Activated CD4-positive, alpha-beta T cell treated with anti-CD3 and anti-CD28 coated beads for 36 hours (primary cell): ENCODE measurements at regions of chr12 and their contacts with region 1.

Region 1: DNA sequence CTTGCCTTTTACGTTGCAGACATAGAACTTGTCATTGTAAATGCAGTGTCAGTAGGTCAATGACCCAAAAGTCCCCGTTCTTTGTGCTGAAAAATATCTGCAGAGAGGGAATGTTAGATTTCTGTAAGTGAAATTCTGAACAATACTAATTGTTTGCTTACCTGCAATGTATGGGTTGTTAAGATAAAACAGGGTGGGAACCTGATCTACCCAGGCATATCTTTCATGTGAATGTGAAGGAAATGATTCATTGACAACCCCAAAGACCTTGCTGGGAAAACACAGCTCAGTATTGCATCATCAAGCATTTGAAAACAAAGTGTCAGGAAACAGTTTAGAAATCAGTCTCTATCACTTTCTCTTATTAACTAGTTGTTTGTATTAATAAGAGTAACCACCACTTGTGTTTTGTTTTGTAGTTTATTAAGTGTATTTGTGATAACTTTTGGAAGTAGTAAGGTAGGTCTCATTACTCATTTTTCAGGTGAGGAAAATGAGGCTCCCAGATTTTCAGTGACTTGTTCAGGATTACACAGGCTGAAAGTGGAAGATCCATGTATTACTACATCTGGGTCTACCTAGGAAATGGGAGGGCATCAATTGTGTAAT is 57.9 kb upstream of the SLC38A2 start:
- DNase-seq: peak; percentile 22
- ATAC-seq: peak; percentile 92
- H3K4me3 Mint-ChIP-seq: peak overlapping the region; percentile 38
- H3K27ac Mint-ChIP-seq: peak overlapping the region; percentile 92
- H3K4me1 Mint-ChIP-seq: peaks cover 24% of the 10 kb centered on the region
- H3K27me3 Mint-ChIP-seq: no peaks in the 10 kb centered on the region

Region 2: GRCh38 chr12:46382964-46383653 is 47.3 kb before region 1 on chr12:
- CTCF ChIA-PET with region 1: no interaction called
- POLR2A ChIA-PET with region 1: no interaction called
- intact Hi-C with region 1: loop called in 1 of 2 experiments (anchors 2 kb)
- DNase-seq: peak; percentile 97
- ATAC-seq: peak; percentile 83
- H3K4me3 Mint-ChIP-seq: peak overlapping the region; percentile 74
- H3K27ac Mint-ChIP-seq: peak overlapping the region; percentile 89
- H3K4me1 Mint-ChIP-seq: peaks cover 39% of the 10 kb centered on the region
- H3K27me3 Mint-ChIP-seq: no peaks in the 10 kb centered on the region